Aorta (tissue), 5 donors: ENCODE measurements at regions of chr2 and their contacts with region 1.

Region 1: DNA sequence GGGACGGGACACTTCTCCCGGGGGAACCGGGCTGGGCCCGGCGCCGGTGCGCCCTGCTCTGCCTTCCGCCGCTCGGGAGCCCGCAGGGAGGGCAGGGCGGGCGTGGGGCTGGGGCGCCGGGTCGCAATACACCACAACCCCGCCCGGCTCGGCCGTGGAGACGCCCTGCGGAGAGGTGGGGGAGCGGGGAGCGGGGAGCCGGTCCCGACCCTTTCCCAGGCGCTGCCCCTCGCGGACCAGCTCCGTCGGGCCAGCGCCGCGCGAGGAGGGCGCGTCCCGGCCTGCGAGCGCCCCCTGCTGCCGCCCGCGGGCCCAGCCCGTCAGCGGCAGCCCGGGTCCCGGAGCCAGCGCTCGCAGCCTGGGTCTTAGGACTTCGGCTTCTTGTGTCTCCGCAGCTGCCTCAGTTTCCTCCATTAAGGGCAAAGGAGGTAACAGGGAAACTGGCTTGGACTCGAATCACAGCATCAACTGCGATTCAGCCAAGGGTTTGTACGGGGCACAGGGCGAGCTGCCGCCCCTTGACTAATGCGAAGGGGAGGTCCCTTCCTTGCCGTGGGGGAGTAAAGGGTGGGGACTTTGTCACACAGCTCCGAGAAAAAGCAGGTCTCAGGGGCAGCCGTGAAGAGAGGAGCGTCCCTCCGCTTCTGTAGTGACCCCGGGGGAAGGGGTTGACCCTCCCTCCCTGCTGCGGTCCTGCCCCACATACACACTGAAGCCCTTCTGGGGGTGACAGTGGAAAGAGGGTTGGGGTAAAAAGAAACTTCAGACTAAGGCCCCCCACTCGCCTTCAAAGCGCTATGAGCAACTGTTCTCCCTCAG is 717 bp upstream of the ADRA2B start:
- DNase-seq: peak; percentile 64 to 81
- ATAC-seq: peak; percentile 84
- H3K4me3 ChIP-seq: peak overlapping the region; percentile 41 to 50
- H3K27ac ChIP-seq: no peak overlapping the region
- H3K4me1 ChIP-seq: no peaks in the 10 kb centered on the region
- H3K27me3 ChIP-seq: no peaks in the 10 kb centered on the region

Region 2: GRCh38 chr2:96065381-96065930 is 51.6 kb before region 1 on chr2:
- intact Hi-C with region 1: loop called in 1 of 2 experiments (anchors 2 kb)
- DNase-seq: peak in 1 of 2 donors; percentile 24
- ATAC-seq: no peak
- H3K4me3 ChIP-seq: no peak overlapping the region
- H3K27ac ChIP-seq: no peak overlapping the region
- H3K4me1 ChIP-seq: no peaks in the 10 kb centered on the region
- H3K27me3 ChIP-seq: no peaks in the 10 kb centered on the region